ENCODE measurements at regions of chr17 and their contacts with region 1.

Region 1: DNA sequence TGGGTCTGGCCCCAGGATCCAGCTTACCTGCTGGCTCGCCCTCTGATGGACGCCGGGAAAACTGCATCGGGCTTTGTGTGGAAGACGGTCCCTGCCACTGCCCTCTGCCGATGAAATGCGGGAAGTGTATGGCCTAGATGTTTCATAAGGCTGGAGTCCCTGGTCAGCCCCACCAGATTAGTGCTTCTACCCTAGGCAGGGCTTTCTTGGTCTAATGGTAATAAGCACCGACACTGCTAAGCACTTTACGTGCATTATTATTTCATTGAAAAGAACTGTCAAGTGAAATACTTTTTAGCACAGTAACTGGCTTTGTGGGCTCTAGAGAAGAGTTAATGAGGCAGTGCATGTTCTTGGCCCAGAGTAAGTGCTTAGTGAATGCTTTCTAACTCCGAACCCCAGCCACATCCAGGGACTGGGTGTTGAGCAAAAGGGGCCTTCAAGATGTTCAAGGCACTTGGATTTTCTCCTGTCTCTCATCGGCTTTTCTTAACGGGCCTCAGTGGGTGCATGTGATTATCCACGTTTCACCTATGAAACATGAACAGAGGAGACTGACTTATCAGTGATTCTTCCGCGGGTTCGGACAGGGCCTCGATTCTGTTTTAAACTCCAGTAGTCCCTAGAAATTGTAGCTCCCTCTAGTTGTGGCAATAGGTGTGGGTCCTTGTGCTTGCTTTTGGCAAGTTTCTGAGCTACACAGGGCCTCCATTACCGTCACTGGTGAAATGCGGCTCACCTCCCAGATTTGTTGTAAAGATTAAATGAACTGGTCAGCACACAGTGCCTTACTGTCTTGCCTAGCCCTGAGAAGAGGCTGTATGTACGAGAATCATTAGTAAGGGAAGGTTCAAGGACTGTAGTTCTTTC is 6.6 kb downstream of the TRAF4 start:
- DNase-seq: peak; percentile 91
- H3K4me3 ChIP-seq: no peak overlapping the region
- H3K27ac ChIP-seq: no peak overlapping the region
- H3K4me1 ChIP-seq: peaks cover 22% of the 10 kb centered on the region
- H3K27me3 ChIP-seq: no peaks in the 10 kb centered on the region
- CTCF ChIP-seq: peak; percentile 99 to 100
- POLR2A ChIP-seq: no peak

Region 2: GRCh38 chr17:28623696-28624095 is 126.7 kb before region 1 on chr17:
- CTCF ChIA-PET with region 1: no interaction called
- POLR2A ChIA-PET with region 1: no interaction called
- dilution Hi-C with region 1: no loop called
- intact Hi-C with region 1: no loop called
- DNase-seq: no peak
- H3K4me3 ChIP-seq: no peak overlapping the region
- H3K27ac ChIP-seq: no peak overlapping the region
- H3K4me1 ChIP-seq: no peaks in the 10 kb centered on the region
- H3K27me3 ChIP-seq: no peaks in the 10 kb centered on the region
- CTCF ChIP-seq: no peak
- POLR2A ChIP-seq: no peak

Region 3: GRCh38 chr17:28717578-28718333 is 32.7 kb before region 1 on chr17 and contains the start of gene RAB34:
- CTCF ChIA-PET with region 1: interaction called, 602 read pairs
- POLR2A ChIA-PET with region 1: interaction called, 3 read pairs
- dilution Hi-C with region 1: no loop called
- intact Hi-C with region 1: no loop called
- DNase-seq: peak; percentile 60
- H3K4me3 ChIP-seq: peak within 1 kb of the TSS; percentile 19 to 60 (median 44)
- H3K27ac ChIP-seq: peak within 1 kb of the TSS; percentile 76
- H3K4me1 ChIP-seq: peaks cover 34% of the 10 kb centered on the region
- H3K27me3 ChIP-seq: no peaks in the 10 kb centered on the region
- CTCF ChIP-seq: peak; percentile 33 to 47
- POLR2A ChIP-seq: peak; percentile 46
- total RNA-seq, gene RAB34: 62.3 and 87.1 TPM in 2 replicates

Region 4: GRCh38 chr17:28783161-28783560 is 32.7 kb after region 1 on chr17:
- CTCF ChIA-PET with region 1: no interaction called
- POLR2A ChIA-PET with region 1: no interaction called
- dilution Hi-C with region 1: no loop called
- intact Hi-C with region 1: no loop called
- DNase-seq: no peak
- H3K4me3 ChIP-seq: no peak overlapping the region
- H3K27ac ChIP-seq: no peak overlapping the region
- H3K4me1 ChIP-seq: peaks cover 2% of the 10 kb centered on the region
- H3K27me3 ChIP-seq: no peaks in the 10 kb centered on the region
- CTCF ChIP-seq: no peak
- POLR2A ChIP-seq: no peak

Region 5: GRCh38 chr17:28865946-28866752 is 115.7 kb after region 1 on chr17:
- CTCF ChIA-PET with region 1: no interaction called
- POLR2A ChIA-PET with region 1: no interaction called
- dilution Hi-C with region 1: no loop called
- intact Hi-C with region 1: no loop called
- DNase-seq: peak; percentile 71
- H3K4me3 ChIP-seq: no peak overlapping the region
- H3K27ac ChIP-seq: peak overlapping the region; percentile 85
- H3K4me1 ChIP-seq: peaks cover 13% of the 10 kb centered on the region
- H3K27me3 ChIP-seq: no peaks in the 10 kb centered on the region
- CTCF ChIP-seq: no peak
- POLR2A ChIP-seq: no peak

Region 6: DNA sequence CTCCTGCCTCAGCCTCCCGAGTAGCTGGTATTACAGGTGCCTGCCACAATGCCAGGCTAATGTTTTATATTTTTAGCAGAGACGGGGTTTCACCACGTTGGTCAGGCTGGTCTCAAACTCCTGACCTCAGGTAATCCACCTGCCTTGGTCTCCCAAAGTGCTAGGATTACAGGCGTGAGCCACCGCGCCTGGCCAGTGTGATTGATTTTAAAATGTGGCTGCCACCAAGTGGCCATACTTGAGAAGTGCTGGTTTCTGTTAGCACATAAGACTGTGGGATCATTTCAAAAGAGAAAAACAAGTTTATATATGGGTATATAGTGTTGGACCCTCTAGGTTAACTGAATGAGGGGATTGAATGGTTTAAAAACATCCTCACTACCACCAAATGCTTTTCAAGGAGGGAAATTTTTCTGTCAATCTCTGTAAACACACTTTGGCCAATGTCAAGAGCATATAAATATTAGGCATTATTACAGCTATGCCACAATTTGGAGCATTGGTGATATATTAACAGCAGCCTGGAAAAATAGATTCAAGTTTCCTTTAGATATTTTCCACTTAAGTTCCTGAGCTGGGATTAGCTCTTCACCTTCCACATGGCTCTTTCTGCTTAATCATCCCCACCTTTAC is 166.0 kb after region 1 on chr17:
- CTCF ChIA-PET with region 1: interaction called, 10 read pairs
- POLR2A ChIA-PET with region 1: no interaction called
- dilution Hi-C with region 1: no loop called
- intact Hi-C with region 1: no loop called
- DNase-seq: peak; percentile 50
- H3K4me3 ChIP-seq: no peak overlapping the region
- H3K27ac ChIP-seq: no peak overlapping the region
- H3K4me1 ChIP-seq: peaks cover 13% of the 10 kb centered on the region
- H3K27me3 ChIP-seq: no peaks in the 10 kb centered on the region
- CTCF ChIP-seq: peak; percentile 46
- POLR2A ChIP-seq: no peak

Region 7: DNA sequence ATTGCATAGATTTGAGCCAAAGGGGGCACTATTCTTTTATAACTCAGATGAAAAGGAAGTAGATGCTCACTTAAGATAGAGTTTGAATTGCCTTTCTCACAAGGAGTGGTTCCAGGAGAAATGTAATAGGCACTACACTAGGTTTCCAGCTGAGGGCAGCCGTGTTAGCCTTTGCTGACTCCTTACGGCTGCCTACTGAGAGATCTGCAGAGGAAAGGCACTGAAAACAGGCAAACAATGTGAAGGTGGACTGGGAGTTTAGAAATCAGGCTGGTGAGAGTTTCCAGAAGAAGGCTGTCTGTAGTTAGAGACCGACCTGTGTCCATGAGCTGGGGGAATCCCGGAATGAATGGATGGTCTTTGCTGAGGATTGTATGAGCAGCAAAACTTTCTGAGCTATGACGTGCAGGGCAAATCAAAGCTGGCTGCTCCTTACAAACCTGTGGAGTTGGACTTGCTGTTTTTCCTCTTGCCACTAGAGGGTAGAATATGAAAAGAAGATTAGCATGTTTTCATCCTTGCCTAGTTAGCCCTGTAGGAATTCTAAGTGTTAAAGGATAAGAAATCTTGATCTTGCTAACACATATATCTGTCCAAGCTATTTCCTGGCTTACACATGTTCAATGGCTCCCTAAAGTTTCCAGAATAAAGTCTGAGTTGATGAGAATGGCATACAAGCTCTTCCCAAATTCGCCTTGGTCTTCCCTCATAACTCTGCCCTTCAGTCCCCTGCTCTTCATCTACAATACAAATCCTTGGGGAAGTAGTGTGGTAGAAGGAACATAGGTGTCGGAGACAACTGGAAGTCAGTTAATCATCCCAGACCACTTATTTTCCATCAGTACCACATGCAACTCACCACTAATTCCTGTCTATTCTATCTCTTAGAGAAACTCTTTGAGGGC is 619.7 kb after region 1 on chr17:
- CTCF ChIA-PET with region 1: no interaction called
- POLR2A ChIA-PET with region 1: no interaction called
- dilution Hi-C with region 1: no loop called
- intact Hi-C with region 1: no loop called
- DNase-seq: peak; percentile 91
- H3K4me3 ChIP-seq: peak overlapping the region in 1 of 3 experiments; percentile 65
- H3K27ac ChIP-seq: no peak overlapping the region
- H3K4me1 ChIP-seq: no peaks in the 10 kb centered on the region
- H3K27me3 ChIP-seq: no peaks in the 10 kb centered on the region
- CTCF ChIP-seq: peak; percentile 59 to 63
- POLR2A ChIP-seq: no peak

Measured in endothelial cell of umbilical vein (primary cell).